Vagina (tissue), 2 donors: ENCODE measurements at regions of chr4 and their contacts with region 1.

Region 1: DNA sequence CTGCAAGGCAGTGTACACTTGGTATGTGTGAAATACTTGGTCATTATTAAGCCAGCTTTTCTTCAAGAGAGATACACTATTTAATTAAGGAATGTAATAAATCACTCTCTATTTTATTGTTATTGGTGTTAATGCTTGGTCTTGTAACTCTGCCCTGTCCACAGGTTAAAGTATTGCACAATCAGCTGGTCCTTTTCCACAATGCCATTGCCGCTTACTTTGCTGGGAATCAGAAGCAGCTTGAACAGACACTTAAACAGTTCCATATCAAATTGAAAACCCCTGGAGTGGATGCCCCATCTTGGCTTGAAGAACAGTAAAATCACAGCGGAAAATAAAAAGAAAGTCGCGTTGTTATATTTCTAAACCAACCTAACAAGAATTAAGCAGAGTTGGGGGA is 26.2 kb upstream of the FHDC1 start:
- DNase-seq: no peak
- H3K4me3 ChIP-seq: no peak overlapping the region
- H3K27ac ChIP-seq: no peak overlapping the region
- H3K4me1 ChIP-seq: no peaks in the 10 kb centered on the region
- H3K27me3 ChIP-seq: no peaks in the 10 kb centered on the region
- CTCF ChIP-seq: no peak
- POLR2A ChIP-seq: no peak

Region 2: GRCh38 chr4:151700566-151701316 is 1209.2 kb before region 1 on chr4:
- intact Hi-C with region 1: loop called (anchors 5 kb)
- DNase-seq: no peak
- H3K4me3 ChIP-seq: no peak overlapping the region
- H3K27ac ChIP-seq: no peak overlapping the region
- H3K4me1 ChIP-seq: no peaks in the 10 kb centered on the region
- H3K27me3 ChIP-seq: no peaks in the 10 kb centered on the region
- CTCF ChIP-seq: no peak
- POLR2A ChIP-seq: no peak